ENCODE measurements at regions of chr11 and their contacts with region 1.

Region 1: DNA sequence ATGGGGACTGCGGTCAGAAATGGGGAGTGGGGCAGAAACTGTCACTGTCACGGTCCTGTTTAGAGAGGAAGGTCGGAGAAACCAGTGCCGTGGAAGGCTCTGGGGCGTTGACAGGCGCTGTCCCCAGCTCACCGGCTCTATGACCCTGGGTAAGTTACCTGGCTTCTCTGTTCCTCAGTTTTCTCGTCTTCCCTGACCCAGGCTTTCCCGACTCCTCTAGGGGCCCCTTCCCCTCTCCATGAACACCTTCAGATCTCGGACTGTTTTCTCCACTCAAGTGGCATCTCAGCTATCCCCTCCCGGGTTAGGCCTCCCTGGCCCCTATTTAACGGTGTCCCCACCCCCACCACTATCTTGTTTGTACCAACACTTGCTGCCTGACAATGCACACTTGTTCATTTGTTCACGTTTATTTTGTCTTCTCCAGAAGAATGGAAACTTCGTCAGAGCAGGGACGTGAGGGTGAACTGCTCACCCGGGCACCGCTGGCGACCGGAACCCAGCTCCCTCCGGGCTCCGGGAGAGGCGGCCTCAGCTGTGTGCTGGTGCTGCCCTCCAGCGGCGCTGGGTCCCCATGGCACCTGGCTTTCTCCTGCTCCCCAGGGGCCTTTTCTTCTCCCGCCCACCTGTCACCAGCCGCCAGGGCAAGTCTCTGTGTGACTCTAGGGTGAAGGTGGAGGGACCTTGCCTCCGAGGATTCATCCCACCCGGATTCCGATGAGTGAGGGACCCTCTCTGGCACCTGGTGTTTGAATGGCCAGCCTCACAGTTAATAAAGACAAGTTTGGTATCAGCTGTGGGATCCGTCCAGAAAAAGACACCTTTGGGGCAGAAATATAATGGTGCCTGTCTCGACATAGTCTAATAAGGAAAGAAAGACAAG is 33.1 kb upstream of the SLC35C1 start:
- DNase-seq: peak; percentile 82 to 88
- ATAC-seq: peak; percentile 94 to 98 (median 96)
- H3K4me3 ChIP-seq: peak overlapping the region; percentile 14 to 69 (median 58)
- H3K27ac ChIP-seq: peak overlapping the region in 9 of 10 donors; percentile 51 to 80 (median 73)
- H3K4me1 ChIP-seq: peaks cover 0 to 14% (median 4%) of the 10 kb centered on the region in 9 donors
- H3K27me3 ChIP-seq: no peaks in the 10 kb centered on the region
- CTCF ChIP-seq: peak; percentile 87 to 96 (median 93)

Region 2: GRCh38 chr11:45339729-45340519 is 431.9 kb before region 1 on chr11:
- intact Hi-C with region 1: loop called in 7 of 10 experiments (anchors 2 to 5 kb)
- DNase-seq: peak; percentile 94 to 95
- ATAC-seq: peak; percentile 82 to 97 (median 95)
- H3K4me3 ChIP-seq: peak overlapping the region in 8 of 10 donors; percentile 13 to 33 (median 20)
- H3K27ac ChIP-seq: peak overlapping the region in 2 of 10 donors; percentile 0 to 16
- H3K4me1 ChIP-seq: peaks cover 0 to 15% (median 9%) of the 10 kb centered on the region in 9 donors
- H3K27me3 ChIP-seq: peaks cover 0 to 14% (median 0%) of the 10 kb centered on the region in 7 donors
- CTCF ChIP-seq: peak; percentile 91 to 97 (median 96)

Region 3: GRCh38 chr11:45371251-45372115 is 400.3 kb before region 1 on chr11:
- intact Hi-C with region 1: loop called (anchors 1 to 10 kb)
- DNase-seq: peak; percentile 48 to 61
- ATAC-seq: peak in 7 of 8 donors; percentile 44 to 79 (median 59)
- H3K4me3 ChIP-seq: peak overlapping the region in 2 of 10 donors; percentile 7 to 28
- H3K27ac ChIP-seq: no peak overlapping the region
- H3K4me1 ChIP-seq: peaks cover 0 to 15% (median 5%) of the 10 kb centered on the region in 9 donors
- H3K27me3 ChIP-seq: peaks cover 0 to 40% (median 14%) of the 10 kb centered on the region in 7 donors
- CTCF ChIP-seq: peak; percentile 83 to 94 (median 90)

Region 4: DNA sequence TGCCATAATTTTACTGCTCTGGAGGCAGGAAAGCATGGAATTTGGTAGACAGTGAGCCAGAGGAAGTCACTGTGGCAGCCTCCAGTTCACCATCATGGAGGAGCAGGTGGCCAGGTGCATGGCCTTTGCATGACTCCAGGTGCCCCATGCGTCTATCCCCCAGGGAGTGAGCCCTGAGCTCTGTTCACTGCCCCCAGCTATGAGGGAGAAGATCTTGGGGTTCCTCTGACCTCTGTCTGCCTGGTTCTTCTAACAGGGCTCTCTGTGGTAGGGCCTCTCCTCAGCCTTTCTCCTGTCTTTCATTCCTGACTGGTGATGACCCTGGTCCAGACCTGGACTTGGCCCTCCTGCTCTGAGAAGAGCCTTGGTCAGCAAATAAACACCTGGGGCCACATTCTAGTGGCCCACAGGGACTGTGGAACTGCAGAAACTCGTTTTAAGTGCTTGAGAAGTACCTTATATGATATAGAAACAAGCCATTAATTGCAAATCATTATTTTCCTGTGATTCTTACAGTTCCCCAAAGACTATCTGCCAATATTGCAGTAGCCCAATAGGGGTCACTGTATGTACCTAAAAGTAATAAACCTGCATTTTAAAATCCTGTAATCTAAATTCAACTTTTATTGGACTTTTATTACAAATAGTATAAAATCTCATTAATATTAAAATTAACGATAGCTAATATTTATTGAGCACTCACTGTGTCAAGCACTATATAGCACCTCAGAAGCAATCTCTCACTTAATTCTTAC is 365.7 kb before region 1 on chr11:
- intact Hi-C with region 1: loop called in 3 of 10 experiments (anchors 2 to 10 kb)
- DNase-seq: no peak
- ATAC-seq: no peak
- H3K4me3 ChIP-seq: no peak overlapping the region
- H3K27ac ChIP-seq: no peak overlapping the region
- H3K4me1 ChIP-seq: no peaks in the 10 kb centered on the region
- H3K27me3 ChIP-seq: peaks cover 0 to 48% (median 17%) of the 10 kb centered on the region in 7 donors
- CTCF ChIP-seq: peak; percentile 10 to 69 (median 52)

Region 5: DNA sequence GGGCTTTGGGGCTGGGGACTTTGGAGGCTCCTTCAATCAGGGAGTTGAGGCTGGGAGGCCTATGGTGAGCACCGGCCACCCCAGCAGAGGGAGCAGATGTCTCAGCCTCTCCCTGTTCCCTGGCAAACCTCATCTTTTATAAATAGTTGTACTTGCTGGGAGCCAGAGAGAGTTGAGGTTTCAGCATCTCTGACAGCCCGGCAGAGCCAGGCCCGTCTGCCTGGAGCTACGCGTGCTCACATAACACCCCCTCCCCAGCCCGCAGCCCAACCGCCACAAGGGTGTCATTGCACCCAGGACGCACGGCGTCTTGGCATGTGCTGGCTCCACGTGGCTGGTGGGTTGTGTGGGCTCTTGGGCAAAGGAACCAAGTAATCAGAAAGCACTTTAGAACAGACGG is 233.4 kb before region 1 on chr11:
- intact Hi-C with region 1: loop called in 7 of 10 experiments (anchors 2 to 10 kb)
- DNase-seq: peak; percentile 16 to 20
- ATAC-seq: peak; percentile 46 to 91 (median 82)
- H3K4me3 ChIP-seq: no peak overlapping the region
- H3K27ac ChIP-seq: no peak overlapping the region
- H3K4me1 ChIP-seq: no peaks in the 10 kb centered on the region
- H3K27me3 ChIP-seq: peaks cover 0 to 40% (median 9%) of the 10 kb centered on the region in 7 donors
- CTCF ChIP-seq: peak in 6 of 9 donors; percentile 27 to 58 (median 36)

Region 6: DNA sequence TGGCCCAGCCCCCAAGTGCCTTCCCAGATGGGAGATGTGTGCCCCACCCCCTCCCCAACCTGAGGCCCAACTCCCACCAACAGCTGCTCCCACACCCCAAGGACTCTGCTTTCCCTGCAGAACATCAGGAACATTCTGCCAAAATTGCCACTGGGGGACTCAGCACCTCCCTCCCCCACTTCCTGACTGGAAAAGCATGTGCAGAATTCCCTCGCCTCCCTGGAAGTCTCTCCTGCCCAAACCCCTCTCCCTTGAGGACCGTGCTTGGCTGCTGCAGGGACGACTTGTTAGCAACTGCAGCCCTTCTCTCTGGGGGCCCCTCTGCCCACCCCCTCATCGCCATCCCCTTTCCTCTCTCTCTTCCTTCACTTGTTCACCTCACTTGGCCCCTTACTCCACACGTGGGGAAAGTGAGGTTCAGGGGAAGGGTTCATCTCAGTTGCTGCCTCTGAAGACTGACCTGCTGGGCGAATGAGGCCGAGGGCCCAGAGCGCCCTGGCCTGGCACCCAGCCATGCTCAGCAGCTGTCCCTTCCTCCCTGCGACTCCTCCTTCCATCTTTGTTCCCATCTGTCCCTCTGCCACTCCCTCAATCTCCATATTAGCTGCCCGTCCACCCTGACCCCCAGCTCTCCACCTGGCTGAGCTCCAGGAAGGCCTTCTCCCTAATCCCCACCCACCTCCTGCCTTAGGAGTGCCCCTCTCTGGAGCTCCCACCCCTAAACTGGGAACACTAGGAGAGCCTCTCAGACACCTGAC is 211.5 kb before region 1 on chr11:
- intact Hi-C with region 1: loop called in 1 of 10 experiments (anchors 10 kb)
- DNase-seq: peak; percentile 37 to 42
- ATAC-seq: peak; percentile 4 to 88 (median 40)
- H3K4me3 ChIP-seq: no peak overlapping the region
- H3K27ac ChIP-seq: no peak overlapping the region
- H3K4me1 ChIP-seq: peaks cover 0 to 20% (median 13%) of the 10 kb centered on the region in 9 donors
- H3K27me3 ChIP-seq: peaks cover 0 to 29% (median 0%) of the 10 kb centered on the region in 7 donors
- CTCF ChIP-seq: no peak